ENCODE measurements at regions of chr19 and their contacts with region 1.

Region 1: GRCh38 chr19:17170538-17171297 is 44.4 kb upstream of the USE1 start:
- DNase-seq: peak; percentile 55
- ATAC-seq: peak; percentile 43
- H3K4me3 ChIP-seq: no peak overlapping the region
- H3K4me3 Mint-ChIP-seq: no peak overlapping the region
- H3K27ac ChIP-seq: peak overlapping the region in 1 of 2 donors; percentile 50
- H3K27ac Mint-ChIP-seq: peak overlapping the region; percentile 63
- H3K4me1 ChIP-seq: no peaks in the 10 kb centered on the region
- H3K4me1 Mint-ChIP-seq: peaks cover 6% of the 10 kb centered on the region
- H3K27me3 ChIP-seq: no peaks in the 10 kb centered on the region
- H3K27me3 Mint-ChIP-seq: no peaks in the 10 kb centered on the region
- CTCF ChIP-seq: no peak

Region 2: GRCh38 chr19:17145546-17146497 is 24.9 kb before region 1 on chr19:
- CTCF ChIA-PET with region 1: no interaction called
- POLR2A ChIA-PET with region 1: interaction called, 12 read pairs
- intact Hi-C with region 1: no loop called
- DNase-seq: no peak
- ATAC-seq: no peak
- H3K4me3 ChIP-seq: no peak overlapping the region
- H3K4me3 Mint-ChIP-seq: no peak overlapping the region
- H3K27ac ChIP-seq: no peak overlapping the region
- H3K27ac Mint-ChIP-seq: no peak overlapping the region
- H3K4me1 ChIP-seq: peaks cover 0 to 5% of the 10 kb centered on the region in 2 donors
- H3K4me1 Mint-ChIP-seq: no peaks in the 10 kb centered on the region
- H3K27me3 ChIP-seq: no peaks in the 10 kb centered on the region
- H3K27me3 Mint-ChIP-seq: no peaks in the 10 kb centered on the region
- CTCF ChIP-seq: no peak